ENCODE measurements at regions of chr2 and their contacts with region 1.

Region 1: DNA sequence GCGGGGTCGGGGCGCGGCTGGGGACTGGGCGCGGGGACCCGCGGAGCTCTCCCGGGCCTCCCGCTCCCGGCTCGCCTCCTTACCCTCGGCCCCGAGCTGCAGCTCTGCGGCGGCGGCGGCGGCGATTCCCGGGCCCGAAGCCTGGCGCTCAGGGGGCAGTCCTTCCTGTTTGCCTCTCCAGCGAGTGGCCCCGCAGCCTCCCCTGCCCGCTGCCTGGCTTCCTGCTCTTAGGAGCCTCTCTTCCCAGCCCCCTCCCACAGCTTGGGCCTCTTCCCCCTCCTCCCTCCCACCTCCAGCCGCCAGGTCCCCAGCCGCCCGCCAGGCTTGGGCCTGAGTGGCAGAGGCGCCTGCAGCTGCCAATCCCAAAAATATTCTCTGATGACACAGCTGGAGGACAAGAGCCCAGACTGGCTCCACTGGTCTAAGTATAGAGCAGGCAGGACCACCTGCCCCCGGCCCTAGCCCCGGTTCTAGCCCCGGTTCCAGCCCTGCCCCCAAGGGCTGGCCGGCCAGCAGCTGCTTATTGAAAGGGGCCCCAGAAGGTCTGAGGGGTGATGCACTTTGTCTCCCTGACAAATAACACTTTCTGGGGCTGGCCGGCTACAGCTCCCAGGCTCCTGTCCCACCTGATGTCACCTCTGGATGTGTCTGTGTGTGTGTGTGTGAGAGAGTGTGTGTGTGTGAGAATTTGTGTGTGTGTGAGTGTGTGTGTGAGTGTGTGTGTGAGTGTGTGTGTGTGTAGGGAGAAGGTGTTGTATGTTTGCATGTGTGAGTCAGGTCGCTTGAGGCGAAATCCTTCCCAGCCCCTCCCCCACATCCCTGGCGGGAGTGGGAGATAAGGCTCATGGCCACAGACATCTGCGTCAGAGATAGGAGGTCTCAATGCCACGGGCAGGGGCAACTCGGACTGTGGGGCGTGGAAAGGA is at the start of gene OBSL1:
- DNase-seq: no peak
- ATAC-seq: peak; percentile 34
- H3K4me3 ChIP-seq: peak within 1 kb of the TSS in 1 of 2 experiments; percentile 27
- H3K4me3 Mint-ChIP-seq: peak within 1 kb of the TSS; percentile 71
- H3K27ac ChIP-seq: no peak within 1 kb of the TSS
- H3K27ac Mint-ChIP-seq: no peak within 1 kb of the TSS
- H3K4me1 ChIP-seq: no peaks in the 10 kb centered on the region
- H3K4me1 Mint-ChIP-seq: peaks cover 1% of the 10 kb centered on the region
- H3K27me3 ChIP-seq: peaks cover 5 to 6% of the 10 kb centered on the region in 2 experiments
- H3K27me3 Mint-ChIP-seq: peaks cover 42% of the 10 kb centered on the region
- CTCF ChIP-seq: no peak
- total RNA-seq, gene OBSL1: 0.35 TPM in 1 of 2 experiments, not detected in the other

Region 2: GRCh38 chr2:219418155-219418569 is 153.4 kb before region 1 on chr2 and contains the start of gene DES:
- CTCF ChIA-PET with region 1: no interaction called
- POLR2A ChIA-PET with region 1: no interaction called
- intact Hi-C with region 1: no loop called
- DNase-seq: no peak
- ATAC-seq: no peak
- H3K4me3 ChIP-seq: no peak within 1 kb of the TSS
- H3K4me3 Mint-ChIP-seq: no peak within 1 kb of the TSS
- H3K27ac ChIP-seq: no peak within 1 kb of the TSS
- H3K27ac Mint-ChIP-seq: no peak within 1 kb of the TSS
- H3K4me1 ChIP-seq: no peaks in the 10 kb centered on the region
- H3K4me1 Mint-ChIP-seq: no peaks in the 10 kb centered on the region
- H3K27me3 ChIP-seq: peaks cover 9 to 12% of the 10 kb centered on the region in 2 experiments
- H3K27me3 Mint-ChIP-seq: peaks cover 30% of the 10 kb centered on the region
- CTCF ChIP-seq: no peak
- total RNA-seq, gene DES: not detected

Region 3: GRCh38 chr2:219560037-219560892 is 11.3 kb before region 1 on chr2:
- CTCF ChIA-PET with region 1: interaction called, 17 read pairs
- POLR2A ChIA-PET with region 1: no interaction called
- intact Hi-C with region 1: no loop called
- DNase-seq: peak in 3 of 9 experiments; percentile 40 to 56 (median 45)
- ATAC-seq: peak; percentile 88
- H3K4me3 ChIP-seq: no peak overlapping the region
- H3K4me3 Mint-ChIP-seq: no peak overlapping the region
- H3K27ac ChIP-seq: no peak overlapping the region
- H3K27ac Mint-ChIP-seq: no peak overlapping the region
- H3K4me1 ChIP-seq: no peaks in the 10 kb centered on the region
- H3K4me1 Mint-ChIP-seq: no peaks in the 10 kb centered on the region
- H3K27me3 ChIP-seq: no peaks in the 10 kb centered on the region
- H3K27me3 Mint-ChIP-seq: peaks cover 32% of the 10 kb centered on the region
- CTCF ChIP-seq: peak; percentile 77

Region 4: DNA sequence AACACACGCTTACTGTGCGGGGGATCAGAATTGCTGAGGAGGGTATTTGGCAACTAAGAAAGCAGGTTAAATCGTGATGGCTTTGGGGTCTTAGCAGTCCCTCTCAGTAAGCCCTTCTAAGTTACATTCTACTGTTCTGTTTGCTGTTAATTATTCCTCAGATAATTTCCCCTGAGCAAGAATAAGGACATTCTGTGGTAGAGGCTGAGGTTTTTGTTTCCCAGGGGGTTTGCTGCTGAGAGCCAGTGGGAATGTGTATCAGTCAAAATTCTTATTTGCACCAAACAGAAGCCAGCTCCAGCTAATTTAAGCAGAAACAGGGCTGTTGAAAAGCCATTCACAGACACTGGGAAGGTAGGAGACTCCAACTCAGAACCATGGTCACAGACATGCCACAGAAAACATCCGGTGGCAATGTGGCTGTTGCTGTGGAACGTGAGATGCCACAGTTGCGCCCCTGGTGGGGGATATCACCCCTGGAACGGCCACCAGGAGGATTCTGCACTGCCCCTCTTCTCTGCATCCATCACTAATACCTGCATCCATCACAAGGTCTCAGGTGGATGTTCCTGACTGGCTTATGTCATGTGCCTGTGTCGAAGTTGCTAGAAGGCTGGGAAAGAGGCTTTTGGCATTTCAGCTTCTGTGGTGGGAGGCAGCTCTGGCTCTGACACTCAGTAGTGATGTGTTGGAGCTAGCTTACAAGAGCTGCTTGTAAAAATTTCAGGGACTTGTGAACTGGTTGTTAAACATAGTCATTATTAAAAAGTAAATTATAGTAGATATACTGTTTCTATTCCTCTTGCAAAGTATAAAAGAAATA is 79.1 kb after region 1 on chr2:
- CTCF ChIA-PET with region 1: no interaction called
- POLR2A ChIA-PET with region 1: no interaction called
- intact Hi-C with region 1: no loop called
- DNase-seq: peak in 1 of 9 experiments; percentile 17
- ATAC-seq: no peak
- H3K4me3 ChIP-seq: no peak overlapping the region
- H3K4me3 Mint-ChIP-seq: no peak overlapping the region
- H3K27ac ChIP-seq: no peak overlapping the region
- H3K27ac Mint-ChIP-seq: no peak overlapping the region
- H3K4me1 ChIP-seq: no peaks in the 10 kb centered on the region
- H3K4me1 Mint-ChIP-seq: no peaks in the 10 kb centered on the region
- H3K27me3 ChIP-seq: peaks cover 0 to 3% of the 10 kb centered on the region in 2 experiments
- H3K27me3 Mint-ChIP-seq: peaks cover 51% of the 10 kb centered on the region
- CTCF ChIP-seq: no peak